ENCODE measurements at regions of chr11 and their contacts with region 1.

Region 1: GRCh38 chr11:65366340-65366773 is 11.8 kb downstream of the TIGD3 start:
- DNase-seq: no peak
- ATAC-seq: peak; percentile 79
- H3K4me3 ChIP-seq: no peak overlapping the region
- H3K27ac ChIP-seq: no peak overlapping the region
- H3K4me1 ChIP-seq: no peaks in the 10 kb centered on the region
- H3K27me3 ChIP-seq: no peaks in the 10 kb centered on the region

Region 2: GRCh38 chr11:65516135-65516935 is 150.0 kb after region 1 on chr11:
- intact Hi-C with region 1: loop called (anchors 2 to 5 kb)
- DNase-seq: peak; percentile 14 to 21
- ATAC-seq: no peak
- H3K4me3 ChIP-seq: no peak overlapping the region
- H3K27ac ChIP-seq: no peak overlapping the region
- H3K4me1 ChIP-seq: no peaks in the 10 kb centered on the region
- H3K27me3 ChIP-seq: no peaks in the 10 kb centered on the region